ENCODE measurements at regions of chr1 and their contacts with region 1.

Region 1: GRCh38 chr1:88877382-88877825 is 14.0 kb downstream of the GTF2B start:
- DNase-seq: peak; percentile 19
- ATAC-seq: no peak; the same call in 1 of the 2 replicates
- H3K4me3 ChIP-seq: no peak overlapping the region
- H3K27ac ChIP-seq: no peak overlapping the region
- H3K4me1 ChIP-seq: no peaks in the 10 kb centered on the region
- H3K27me3 ChIP-seq: no peaks in the 10 kb centered on the region
- CTCF ChIP-seq: peak in 2 of 3 experiments; percentile 61 to 69; a peak in 3 of 6 replicates
- POLR2A ChIP-seq: no peak
- RAD21 ChIP-seq: peak; percentile 69

Region 2: DNA sequence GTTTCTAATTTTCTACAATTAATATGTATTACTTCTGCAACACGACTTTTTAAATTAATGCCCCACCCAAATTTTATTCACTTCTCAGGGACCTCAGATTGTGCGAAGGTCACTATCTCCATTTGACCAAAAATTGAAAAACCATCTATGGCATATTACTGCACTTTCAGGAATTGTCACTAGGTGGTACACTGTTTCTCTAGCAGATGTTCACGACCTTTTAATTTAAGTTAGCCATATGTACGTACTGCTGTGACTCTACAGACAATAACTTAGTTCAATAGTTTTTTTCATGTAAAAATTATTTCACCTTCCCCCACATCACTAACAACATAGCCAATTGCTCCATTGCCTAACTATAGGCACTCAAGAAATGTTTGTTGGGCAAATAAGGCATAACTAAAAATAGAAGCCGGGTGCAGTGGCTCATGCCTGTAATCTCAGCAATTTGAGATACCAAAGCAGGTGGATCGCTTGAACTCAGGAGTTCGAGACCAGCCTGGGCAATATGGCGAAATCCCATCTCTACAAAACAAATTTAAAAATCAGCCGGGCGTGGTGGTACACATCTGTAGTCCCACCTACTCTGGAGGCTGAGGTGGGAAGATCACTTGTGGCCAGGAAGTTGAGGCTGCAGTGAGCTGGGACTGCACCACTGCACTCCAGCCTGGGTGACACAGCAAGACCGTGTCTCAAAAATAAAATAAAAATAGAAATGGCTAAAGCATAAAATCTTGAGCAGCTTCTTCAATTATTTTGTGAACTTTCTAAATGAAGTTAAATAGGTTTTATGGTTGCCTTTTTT is 269.1 kb before region 1 on chr1:
- CTCF ChIA-PET with region 1: no interaction called
- POLR2A ChIA-PET with region 1: no interaction called
- RAD21 ChIA-PET with region 1: no interaction called
- intact Hi-C with region 1: loop called (anchors 2 kb)
- DNase-seq: peak; percentile 32
- ATAC-seq: peak; percentile 82
- H3K4me3 ChIP-seq: no peak overlapping the region
- H3K27ac ChIP-seq: no peak overlapping the region
- H3K4me1 ChIP-seq: peaks cover 3 to 18% of the 10 kb centered on the region in 2 experiments; a peak in 3 of 4 replicates
- H3K27me3 ChIP-seq: no peaks in the 10 kb centered on the region
- CTCF ChIP-seq: peak; percentile 32 to 69 (median 64); a peak in 5 of 6 replicates
- POLR2A ChIP-seq: no peak
- RAD21 ChIP-seq: peak; percentile 58

Region 3: GRCh38 chr1:88655685-88656299 is 221.6 kb before region 1 on chr1:
- CTCF ChIA-PET with region 1: interaction called, 6 read pairs
- POLR2A ChIA-PET with region 1: no interaction called
- RAD21 ChIA-PET with region 1: interaction called in 1 of 2 experiments, 4 read pairs
- intact Hi-C with region 1: loop called (anchors 1 kb)
- DNase-seq: peak; percentile 19
- ATAC-seq: no peak
- H3K4me3 ChIP-seq: no peak overlapping the region
- H3K27ac ChIP-seq: no peak overlapping the region
- H3K4me1 ChIP-seq: no peaks in the 10 kb centered on the region
- H3K27me3 ChIP-seq: no peaks in the 10 kb centered on the region
- CTCF ChIP-seq: peak; percentile 48 to 70 (median 51); a peak in 5 of 6 replicates
- POLR2A ChIP-seq: no peak
- RAD21 ChIP-seq: peak; percentile 45

Region 4: DNA sequence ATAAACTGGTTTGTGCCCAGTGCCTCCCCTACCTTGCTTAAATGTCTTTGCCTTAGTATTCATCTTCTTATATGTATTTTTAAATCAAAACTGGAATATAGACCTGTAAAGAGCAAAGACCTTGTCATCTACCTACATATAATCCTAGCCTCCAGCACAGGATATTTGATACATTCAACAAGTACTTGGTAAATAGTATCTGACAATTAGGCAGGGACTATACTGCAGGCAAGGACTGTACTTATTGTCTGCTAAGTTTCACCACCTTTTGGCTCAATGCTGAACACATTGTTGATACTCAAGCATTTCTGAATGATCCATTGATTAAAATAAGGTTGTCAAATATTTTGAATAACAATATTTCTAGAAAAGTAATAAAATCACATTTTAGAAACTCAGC is 96.9 kb before region 1 on chr1:
- CTCF ChIA-PET with region 1: no interaction called
- POLR2A ChIA-PET with region 1: no interaction called
- RAD21 ChIA-PET with region 1: no interaction called
- intact Hi-C with region 1: no loop called
- DNase-seq: no peak
- ATAC-seq: no peak
- H3K4me3 ChIP-seq: no peak overlapping the region
- H3K27ac ChIP-seq: no peak overlapping the region
- H3K4me1 ChIP-seq: peaks cover 0 to 2% of the 10 kb centered on the region in 2 experiments; a peak in 2 of 4 replicates
- H3K27me3 ChIP-seq: no peaks in the 10 kb centered on the region
- CTCF ChIP-seq: no peak
- POLR2A ChIP-seq: no peak
- RAD21 ChIP-seq: no peak

Region 5: DNA sequence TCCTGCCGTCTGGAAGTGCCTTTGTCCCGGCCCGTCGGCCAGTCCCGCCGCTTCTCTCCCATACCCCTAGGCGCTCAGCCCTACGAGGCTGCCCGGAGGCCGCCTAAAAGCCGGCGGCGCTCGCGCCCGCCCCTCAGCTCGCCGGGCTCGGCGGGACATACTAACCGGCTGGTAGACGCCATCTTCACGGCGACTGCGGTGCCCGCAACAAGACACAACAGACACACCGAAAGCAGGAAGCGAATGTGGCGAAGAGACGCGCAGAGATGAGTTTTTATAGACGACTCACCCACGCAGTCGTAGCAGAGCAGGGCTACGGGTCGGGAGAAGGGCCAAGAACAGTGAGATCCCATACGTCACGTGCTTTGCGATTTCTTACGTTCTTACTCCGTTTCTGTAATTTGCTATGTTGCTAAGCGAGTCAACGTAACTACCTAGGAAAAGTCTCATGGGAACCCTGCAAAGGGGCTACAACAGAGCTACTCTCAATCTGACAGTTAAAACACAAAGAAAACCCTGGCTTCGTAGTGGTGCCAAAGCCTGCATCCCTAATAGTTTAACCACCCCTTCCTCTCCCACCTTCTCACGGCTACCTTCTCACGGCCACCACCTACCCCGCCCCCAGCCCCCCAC is 14.0 kb after region 1 on chr1 and contains the start of gene GTF2B:
- CTCF ChIA-PET with region 1: interaction called, 9 read pairs
- POLR2A ChIA-PET with region 1: interaction called, 15 read pairs
- RAD21 ChIA-PET with region 1: no interaction called
- intact Hi-C with region 1: no loop called
- DNase-seq: peak; percentile 95
- ATAC-seq: peak; percentile 69
- H3K4me3 ChIP-seq: peak within 1 kb of the TSS; percentile 84 to 93
- H3K27ac ChIP-seq: peak within 1 kb of the TSS; percentile 75
- H3K4me1 ChIP-seq: peaks cover 9 to 23% of the 10 kb centered on the region in 2 experiments; a peak in 3 of 4 replicates
- H3K27me3 ChIP-seq: no peaks in the 10 kb centered on the region
- CTCF ChIP-seq: no peak
- POLR2A ChIP-seq: peak; percentile 99
- RAD21 ChIP-seq: no peak
- total RNA-seq, gene GTF2B: 31.8 TPM

Region 6: DNA sequence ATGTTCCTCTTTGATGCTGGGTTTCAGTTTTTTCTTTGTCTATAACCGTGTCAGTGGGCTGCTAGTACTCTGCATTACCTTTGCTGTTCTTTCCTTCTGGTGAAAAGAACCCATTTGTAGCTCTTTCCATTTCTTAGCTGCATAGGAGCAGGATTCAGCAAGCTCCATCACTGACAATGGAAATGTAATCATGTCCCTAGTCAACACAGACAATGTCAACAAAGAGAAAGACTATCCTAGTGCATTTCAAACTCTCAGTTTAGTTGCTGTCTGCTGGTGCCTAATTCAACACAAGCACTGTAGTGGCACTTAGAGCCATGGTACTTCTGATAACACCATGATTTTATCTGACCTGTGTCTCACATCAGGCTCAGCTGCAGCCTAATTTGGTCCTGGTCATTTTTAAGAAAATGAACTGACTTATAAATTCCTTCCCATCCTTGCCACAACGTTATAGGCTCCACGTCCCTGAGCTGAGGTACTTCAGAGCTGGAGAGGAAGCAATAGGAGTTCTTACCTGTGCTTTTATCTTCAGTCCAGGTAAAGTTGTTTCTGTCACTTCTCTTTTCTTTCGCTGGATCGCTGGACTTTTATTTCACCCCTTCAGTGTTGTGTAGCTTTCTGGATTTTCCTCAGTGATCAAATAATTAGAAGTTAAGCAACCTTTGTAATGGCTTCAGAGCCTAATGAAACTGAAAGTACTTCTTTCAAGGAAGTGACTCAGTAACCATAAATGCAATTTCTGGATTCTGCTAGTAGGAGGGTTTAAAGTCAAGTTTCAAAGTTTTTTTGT is 145.0 kb after region 1 on chr1 and contains the start of gene GBP3:
- CTCF ChIA-PET with region 1: no interaction called
- POLR2A ChIA-PET with region 1: no interaction called
- RAD21 ChIA-PET with region 1: no interaction called
- intact Hi-C with region 1: no loop called
- DNase-seq: peak; percentile 18
- ATAC-seq: peak; percentile 79
- H3K4me3 ChIP-seq: peak within 1 kb of the TSS; percentile 45 to 61
- H3K27ac ChIP-seq: peak within 1 kb of the TSS; percentile 44
- H3K4me1 ChIP-seq: peaks cover 8 to 20% of the 10 kb centered on the region in 2 experiments; a peak in 3 of 4 replicates
- H3K27me3 ChIP-seq: no peaks in the 10 kb centered on the region
- CTCF ChIP-seq: no peak
- POLR2A ChIP-seq: no peak
- RAD21 ChIP-seq: 0 out of 2 replicates have a peak, but pooled peaks have one; percentile 8
- total RNA-seq, gene GBP3: 1.2 TPM

Measured in HCT116 (cell line).